MCF 10A (cell line): ENCODE measurements at regions of chr13 and their contacts with region 1.

Region 1: GRCh38 chr13:37602747-37603381 is 4.3 kb upstream of the POSTN start:
- DNase-seq: peak; percentile 42
- H3K4me3 Mint-ChIP-seq: no peak overlapping the region
- H3K27ac Mint-ChIP-seq: no peak overlapping the region
- H3K4me1 Mint-ChIP-seq: no peaks in the 10 kb centered on the region
- H3K27me3 Mint-ChIP-seq: no peaks in the 10 kb centered on the region
- CTCF ChIP-seq: peak; percentile 61

Region 2: GRCh38 chr13:37109051-37109678 is 493.7 kb before region 1 on chr13:
- CTCF ChIA-PET with region 1: interaction called, 103 read pairs
- POLR2A ChIA-PET with region 1: no interaction called
- intact Hi-C with region 1: loop called (anchors 1 kb)
- DNase-seq: peak; percentile 55
- H3K4me3 Mint-ChIP-seq: no peak overlapping the region
- H3K27ac Mint-ChIP-seq: no peak overlapping the region
- H3K4me1 Mint-ChIP-seq: peaks cover 19% of the 10 kb centered on the region
- H3K27me3 Mint-ChIP-seq: no peaks in the 10 kb centered on the region
- CTCF ChIP-seq: peak; percentile 74

Region 3: GRCh38 chr13:37446503-37446902 is 156.4 kb before region 1 on chr13:
- CTCF ChIA-PET with region 1: no interaction called
- POLR2A ChIA-PET with region 1: no interaction called
- intact Hi-C with region 1: loop called (anchors 10 kb)
- DNase-seq: peak; percentile 62
- H3K4me3 Mint-ChIP-seq: no peak overlapping the region
- H3K27ac Mint-ChIP-seq: peak overlapping the region; percentile 71
- H3K4me1 Mint-ChIP-seq: peaks cover 31% of the 10 kb centered on the region
- H3K27me3 Mint-ChIP-seq: no peaks in the 10 kb centered on the region
- CTCF ChIP-seq: no peak

Region 4: DNA sequence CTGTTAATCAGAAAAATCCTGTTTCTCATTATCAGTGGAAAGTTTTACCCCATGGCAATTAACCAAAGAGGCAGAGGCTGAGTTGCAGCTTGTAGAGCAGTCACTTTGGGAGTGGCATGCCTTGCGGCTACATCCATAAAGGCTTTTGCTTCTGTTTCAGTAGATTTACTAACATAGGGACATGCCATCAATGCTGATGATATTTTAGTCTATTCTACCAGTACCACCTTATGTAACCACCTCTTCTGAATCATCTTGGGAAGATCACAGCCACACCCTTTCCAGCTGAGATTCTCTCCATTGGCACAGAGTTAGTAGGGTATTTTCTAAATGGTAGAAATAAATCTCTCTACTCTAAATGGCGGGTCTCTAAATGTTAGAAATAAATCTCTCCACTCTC is 41.8 kb before region 1 on chr13:
- CTCF ChIA-PET with region 1: no interaction called
- POLR2A ChIA-PET with region 1: no interaction called
- intact Hi-C with region 1: no loop called
- DNase-seq: no peak
- H3K4me3 Mint-ChIP-seq: no peak overlapping the region
- H3K27ac Mint-ChIP-seq: no peak overlapping the region
- H3K4me1 Mint-ChIP-seq: no peaks in the 10 kb centered on the region
- H3K27me3 Mint-ChIP-seq: no peaks in the 10 kb centered on the region
- CTCF ChIP-seq: no peak

Region 5: DNA sequence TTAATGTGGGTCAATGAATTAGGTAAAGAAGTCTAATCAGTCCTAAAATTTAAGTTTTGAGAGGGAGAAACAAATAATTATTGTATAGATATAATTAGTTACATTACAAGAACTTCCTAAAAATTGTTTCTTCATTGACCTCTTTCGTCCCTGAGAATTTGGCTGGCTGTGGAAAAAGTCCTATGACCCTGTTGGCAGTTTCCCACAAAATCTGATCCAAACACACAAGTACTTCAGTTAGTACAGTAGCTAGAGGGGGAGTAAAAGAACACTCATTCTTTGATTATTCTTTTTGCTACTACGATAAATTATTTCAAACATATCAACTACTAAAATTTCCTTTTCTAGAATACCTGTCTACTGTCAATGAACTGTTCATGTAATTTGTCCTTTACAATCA is 15.6 kb before region 1 on chr13:
- CTCF ChIA-PET with region 1: interaction called, 10 read pairs
- POLR2A ChIA-PET with region 1: no interaction called
- intact Hi-C with region 1: no loop called
- DNase-seq: no peak
- H3K4me3 Mint-ChIP-seq: no peak overlapping the region
- H3K27ac Mint-ChIP-seq: no peak overlapping the region
- H3K4me1 Mint-ChIP-seq: no peaks in the 10 kb centered on the region
- H3K27me3 Mint-ChIP-seq: no peaks in the 10 kb centered on the region
- CTCF ChIP-seq: no peak